Activated B cell treated with CpG ODN at 0.5 μM for 24 hours (primary cell): ENCODE measurements at regions of chr13 and their contacts with region 1.

Region 1: GRCh38 chr13:48975856-48976575 is at the start of gene FNDC3A:
- DNase-seq: peak; percentile 82
- ATAC-seq: peak; percentile 77
- H3K4me3 Mint-ChIP-seq: peak within 1 kb of the TSS; percentile 95
- H3K27ac Mint-ChIP-seq: peak within 1 kb of the TSS; percentile 98
- H3K4me1 Mint-ChIP-seq: peaks cover 47% of the 10 kb centered on the region
- H3K27me3 Mint-ChIP-seq: no peaks in the 10 kb centered on the region
- CTCF ChIP-seq: no peak
- total RNA-seq, gene FNDC3A: 30.3 and 34.1 TPM in 2 replicates

Region 2: GRCh38 chr13:48037346-48038173 is 938.5 kb before region 1 on chr13 and contains the start of gene NUDT15:
- CTCF ChIA-PET with region 1: no interaction called
- POLR2A ChIA-PET with region 1: no interaction called
- intact Hi-C with region 1: loop called (anchors 2 kb)
- DNase-seq: peak; percentile 92
- ATAC-seq: peak; percentile 94
- H3K4me3 Mint-ChIP-seq: peak within 1 kb of the TSS; percentile 93
- H3K27ac Mint-ChIP-seq: peak within 1 kb of the TSS; percentile 96
- H3K4me1 Mint-ChIP-seq: peaks cover 29% of the 10 kb centered on the region
- H3K27me3 Mint-ChIP-seq: no peaks in the 10 kb centered on the region
- CTCF ChIP-seq: peak; percentile 83
- total RNA-seq, gene NUDT15: 5.5 and 6.2 TPM in 2 replicates

Region 3: GRCh38 chr13:48828962-48829421 is 147.0 kb before region 1 on chr13:
- CTCF ChIA-PET with region 1: no interaction called
- POLR2A ChIA-PET with region 1: interaction called, 6 read pairs
- intact Hi-C with region 1: loop called (anchors 1 kb)
- DNase-seq: no peak
- ATAC-seq: peak; percentile 82
- H3K4me3 Mint-ChIP-seq: peak overlapping the region; percentile 59
- H3K27ac Mint-ChIP-seq: peak overlapping the region; percentile 78
- H3K4me1 Mint-ChIP-seq: peaks cover 32% of the 10 kb centered on the region
- H3K27me3 Mint-ChIP-seq: no peaks in the 10 kb centered on the region
- CTCF ChIP-seq: no peak

Region 4: GRCh38 chr13:49110122-49110912 is 134.3 kb after region 1 on chr13:
- CTCF ChIA-PET with region 1: no interaction called
- POLR2A ChIA-PET with region 1: interaction called, 16 read pairs
- intact Hi-C with region 1: loop called (anchors 1 kb)
- DNase-seq: peak; percentile 51
- ATAC-seq: peak; percentile 83
- H3K4me3 Mint-ChIP-seq: peak overlapping the region; percentile 91
- H3K27ac Mint-ChIP-seq: peak overlapping the region; percentile 83
- H3K4me1 Mint-ChIP-seq: peaks cover 19% of the 10 kb centered on the region
- H3K27me3 Mint-ChIP-seq: no peaks in the 10 kb centered on the region
- CTCF ChIP-seq: no peak

Region 5: GRCh38 chr13:49585220-49586157 is 609.5 kb after region 1 on chr13 and contains the start of gene RCBTB1:
- CTCF ChIA-PET with region 1: no interaction called
- POLR2A ChIA-PET with region 1: no interaction called
- intact Hi-C with region 1: loop called (anchors 5 kb)
- DNase-seq: peak; percentile 73
- ATAC-seq: peak; percentile 87
- H3K4me3 Mint-ChIP-seq: peak within 1 kb of the TSS; percentile 90
- H3K27ac Mint-ChIP-seq: peak within 1 kb of the TSS; percentile 86
- H3K4me1 Mint-ChIP-seq: peaks cover 31% of the 10 kb centered on the region
- H3K27me3 Mint-ChIP-seq: no peaks in the 10 kb centered on the region
- CTCF ChIP-seq: no peak
- total RNA-seq, gene RCBTB1: 19.7 and 22.6 TPM in 2 replicates

Region 6: DNA sequence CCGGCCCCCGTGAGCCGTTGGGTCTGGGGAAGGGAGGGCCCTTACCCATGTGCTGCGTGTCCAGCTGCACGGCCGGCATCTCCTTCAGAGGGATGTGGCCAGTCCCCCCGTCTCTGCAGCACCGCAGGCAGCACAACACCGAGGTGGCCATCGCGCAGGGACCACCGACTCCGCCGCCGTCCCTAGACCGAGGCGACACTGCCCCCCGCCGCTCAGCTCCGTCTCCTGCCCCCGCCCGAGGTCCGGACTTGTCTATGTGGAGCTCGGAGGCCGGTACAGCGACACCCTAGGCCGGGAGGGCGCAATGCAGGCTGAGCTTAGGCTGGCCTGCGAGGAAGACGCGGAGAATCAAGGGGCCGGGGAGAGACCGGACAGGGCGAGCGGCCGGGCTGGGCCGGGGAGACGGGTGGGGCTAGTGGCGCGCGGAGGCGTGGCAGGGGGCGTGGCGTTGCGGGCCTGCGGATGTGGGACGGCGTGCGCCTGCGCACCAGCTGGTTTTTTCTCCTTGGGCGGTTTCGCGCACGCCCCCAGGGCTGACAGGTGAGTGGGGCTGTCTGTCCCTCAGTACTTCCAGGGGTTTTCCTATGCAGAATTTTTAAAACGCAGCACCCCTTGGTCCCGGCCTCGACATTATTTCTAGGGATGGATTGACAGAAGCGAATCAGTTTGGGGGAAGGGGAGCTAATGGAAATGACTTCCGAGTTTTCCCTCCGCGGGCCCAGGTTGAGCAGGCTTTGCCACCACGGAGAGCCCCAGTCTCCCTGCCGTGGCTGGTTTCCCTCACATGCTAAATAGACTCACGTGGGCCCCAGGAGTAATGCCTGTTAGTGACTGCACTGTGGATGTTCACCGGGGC is 960.3 kb after region 1 on chr13 and contains the start of gene SPRYD7:
- CTCF ChIA-PET with region 1: no interaction called
- POLR2A ChIA-PET with region 1: no interaction called
- intact Hi-C with region 1: loop called (anchors 5 kb)
- DNase-seq: peak; percentile 100
- ATAC-seq: peak; percentile 98
- H3K4me3 Mint-ChIP-seq: peak within 1 kb of the TSS; percentile 97
- H3K27ac Mint-ChIP-seq: peak within 1 kb of the TSS; percentile 91
- H3K4me1 Mint-ChIP-seq: peaks cover 32% of the 10 kb centered on the region
- H3K27me3 Mint-ChIP-seq: no peaks in the 10 kb centered on the region
- CTCF ChIP-seq: no peak
- total RNA-seq, gene SPRYD7: 3.7 and 4.5 TPM in 2 replicates